ENCODE measurements at regions of chr21 and their contacts with region 1.

Region 1: DNA sequence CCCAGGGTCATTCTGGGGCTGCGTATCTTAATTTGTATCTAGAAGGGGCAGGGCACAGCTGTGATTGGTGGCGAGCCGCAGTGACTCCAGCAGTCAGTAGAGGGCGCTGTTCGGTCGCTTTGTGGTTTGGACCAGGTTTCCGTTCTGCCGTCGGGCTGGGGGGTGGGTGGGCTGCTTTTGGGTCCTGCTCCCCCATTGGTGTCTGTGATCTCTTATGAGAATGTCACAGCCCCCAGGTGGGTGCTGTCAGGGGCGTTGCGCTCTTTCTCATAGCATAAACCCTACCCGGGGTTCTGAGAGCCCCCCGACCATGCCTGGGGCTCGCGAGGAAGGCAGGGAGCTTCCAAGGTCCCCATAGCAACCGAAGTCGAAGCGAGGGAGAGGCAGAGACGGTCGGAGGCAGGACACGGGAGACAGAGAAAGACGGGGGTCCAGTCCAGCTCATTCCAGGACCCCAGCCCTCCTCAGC is 5.4 kb downstream of the TFF3 start:
- DNase-seq: peak; percentile 12
- ATAC-seq: 0 out of 2 replicates have a peak, but pooled peaks have one; percentile 54
- H3K4me3 ChIP-seq: no peak overlapping the region
- H3K27ac ChIP-seq: no peak overlapping the region
- H3K4me1 ChIP-seq: peaks cover 27% of the 10 kb centered on the region
- H3K27me3 ChIP-seq: no peaks in the 10 kb centered on the region
- CTCF ChIP-seq: peak; percentile 86

Region 2: DNA sequence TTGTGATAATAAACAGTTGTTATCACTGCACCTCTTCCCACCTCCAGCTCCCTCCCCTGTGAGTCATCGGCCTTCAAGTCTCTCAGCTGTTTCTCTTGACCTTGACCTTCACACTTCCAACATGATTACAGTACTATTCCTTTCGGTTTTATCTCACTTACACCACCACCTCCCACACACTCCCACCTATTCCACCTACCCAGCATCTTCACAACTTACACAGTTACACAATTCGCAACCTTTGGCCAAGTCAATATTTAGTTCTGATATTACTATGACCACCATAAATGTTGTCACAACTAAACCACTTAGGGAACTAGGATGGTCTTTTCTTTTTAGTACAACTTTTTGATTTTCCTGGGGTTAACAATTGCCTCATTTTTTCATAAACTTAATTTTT is 603.1 kb before region 1 on chr21:
- CTCF ChIA-PET with region 1: no interaction called
- POLR2A ChIA-PET with region 1: no interaction called
- in situ Hi-C with region 1: no loop called
- intact Hi-C with region 1: no loop called
- DNase-seq: no peak
- ATAC-seq: no peak
- H3K4me3 ChIP-seq: no peak overlapping the region
- H3K27ac ChIP-seq: peak overlapping the region; percentile 48; the same call in 1 of the 2 replicates
- H3K4me1 ChIP-seq: peaks cover 10% of the 10 kb centered on the region
- H3K27me3 ChIP-seq: no peaks in the 10 kb centered on the region
- CTCF ChIP-seq: no peak

Region 3: DNA sequence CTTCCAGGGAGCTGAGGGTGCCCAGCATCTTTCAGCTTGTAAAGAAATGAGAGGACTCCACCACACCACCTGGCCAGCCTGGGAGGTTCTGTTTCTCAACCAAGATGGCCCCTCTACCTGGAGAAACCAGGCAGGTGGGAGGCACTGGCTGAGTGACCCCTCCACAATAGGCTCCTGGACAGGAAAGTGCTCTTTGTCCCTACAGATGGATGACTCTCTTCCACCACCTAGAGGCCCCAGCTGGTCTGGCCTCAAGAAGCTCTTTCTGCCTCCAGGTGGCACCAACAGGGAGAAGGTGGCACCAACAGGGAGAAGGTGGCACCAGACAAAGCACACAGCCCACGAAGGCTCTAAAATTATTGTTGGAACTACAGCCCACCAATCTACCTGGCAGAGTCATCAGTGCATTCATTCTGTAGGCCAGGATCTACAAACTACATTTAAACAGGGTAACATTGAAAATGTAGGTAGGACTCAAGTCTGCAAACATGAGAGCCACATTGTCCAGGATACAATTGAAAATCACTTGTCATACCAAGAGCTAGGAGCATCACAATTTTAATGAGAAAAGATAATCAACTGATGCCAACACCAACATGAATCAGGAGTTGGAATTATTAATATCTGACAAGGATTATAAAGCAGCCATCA is 71.7 kb after region 1 on chr21:
- CTCF ChIA-PET with region 1: interaction called, 10 read pairs
- POLR2A ChIA-PET with region 1: no interaction called
- in situ Hi-C with region 1: no loop called
- intact Hi-C with region 1: no loop called
- DNase-seq: peak; percentile 28
- ATAC-seq: peak; percentile 85
- H3K4me3 ChIP-seq: no peak overlapping the region
- H3K27ac ChIP-seq: no peak overlapping the region
- H3K4me1 ChIP-seq: no peaks in the 10 kb centered on the region
- H3K27me3 ChIP-seq: no peaks in the 10 kb centered on the region
- CTCF ChIP-seq: peak; percentile 82

Region 4: GRCh38 chr21:42449296-42449927 is 139.6 kb after region 1 on chr21:
- CTCF ChIA-PET with region 1: no interaction called
- POLR2A ChIA-PET with region 1: no interaction called
- in situ Hi-C with region 1: no loop called
- intact Hi-C with region 1: loop called (anchors 2 kb)
- DNase-seq: no peak
- ATAC-seq: no peak
- H3K4me3 ChIP-seq: no peak overlapping the region
- H3K27ac ChIP-seq: no peak overlapping the region
- H3K4me1 ChIP-seq: no peaks in the 10 kb centered on the region
- H3K27me3 ChIP-seq: no peaks in the 10 kb centered on the region
- CTCF ChIP-seq: no peak

Region 5: GRCh38 chr21:42799516-42799915 is 489.7 kb after region 1 on chr21:
- CTCF ChIA-PET with region 1: no interaction called
- POLR2A ChIA-PET with region 1: no interaction called
- in situ Hi-C with region 1: no loop called
- intact Hi-C with region 1: no loop called
- DNase-seq: no peak
- ATAC-seq: no peak
- H3K4me3 ChIP-seq: no peak overlapping the region
- H3K27ac ChIP-seq: no peak overlapping the region
- H3K4me1 ChIP-seq: no peaks in the 10 kb centered on the region
- H3K27me3 ChIP-seq: no peaks in the 10 kb centered on the region
- CTCF ChIP-seq: no peak

Measured in Panc1 (cell line).